Psoas muscle (tissue), 8 donors: ENCODE measurements at regions of chr12 and their contacts with region 1.

Region 1: GRCh38 chr12:128783129-128783574 is 40.6 kb downstream of the SLC15A4 start:
- DNase-seq: no peak
- ATAC-seq: no peak
- H3K4me3 ChIP-seq: no peak overlapping the region
- H3K27ac ChIP-seq: no peak overlapping the region
- H3K4me1 ChIP-seq: no peaks in the 10 kb centered on the region
- H3K27me3 ChIP-seq: no peaks in the 10 kb centered on the region
- CTCF ChIP-seq: no peak

Region 2: GRCh38 chr12:128930606-128931005 is 147.5 kb after region 1 on chr12:
- intact Hi-C with region 1: loop called in 1 of 2 experiments (anchors 10 kb)
- DNase-seq: no peak
- ATAC-seq: no peak
- H3K4me3 ChIP-seq: no peak overlapping the region
- H3K27ac ChIP-seq: no peak overlapping the region
- H3K4me1 ChIP-seq: no peaks in the 10 kb centered on the region
- H3K27me3 ChIP-seq: no peaks in the 10 kb centered on the region
- CTCF ChIP-seq: no peak

Region 3: GRCh38 chr12:129119537-129119936 is 336.4 kb after region 1 on chr12:
- intact Hi-C with region 1: no loop called
- DNase-seq: no peak
- ATAC-seq: no peak
- H3K4me3 ChIP-seq: no peak overlapping the region
- H3K27ac ChIP-seq: no peak overlapping the region
- H3K4me1 ChIP-seq: no peaks in the 10 kb centered on the region
- H3K27me3 ChIP-seq: no peaks in the 10 kb centered on the region
- CTCF ChIP-seq: no peak